ENCODE measurements at regions of chr6 and their contacts with region 1.

Region 1: GRCh38 chr6:53679446-53679933 is 13.9 kb upstream of the KLHL31 start:
- DNase-seq: no peak
- ATAC-seq: peak; percentile 64

Region 2: GRCh38 chr6:53645859-53646258 is 33.6 kb before region 1 on chr6:
- intact Hi-C with region 1: loop called (anchors 2 kb)
- DNase-seq: no peak
- ATAC-seq: peak; percentile 49

Region 3: DNA sequence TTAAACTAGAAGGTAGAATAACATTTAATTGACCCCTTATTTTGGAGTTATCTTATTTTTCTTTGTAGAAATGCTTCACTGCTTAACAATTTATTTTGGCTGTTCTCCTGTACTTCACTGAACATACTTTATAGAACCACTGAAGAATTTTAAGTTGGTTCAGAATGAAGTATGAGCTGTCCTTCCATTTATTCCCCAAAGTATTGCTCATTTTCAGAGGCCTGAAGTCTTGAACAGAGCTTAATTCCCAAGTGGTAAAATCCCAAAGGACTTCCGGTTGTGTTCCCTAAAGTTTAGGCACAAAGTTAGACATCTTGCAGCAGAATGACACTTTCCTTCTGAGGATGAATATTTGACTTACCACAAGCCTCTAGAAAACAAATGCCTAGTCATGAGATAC is 862.1 kb after region 1 on chr6:
- intact Hi-C with region 1: no loop called
- DNase-seq: no peak
- ATAC-seq: no peak